ENCODE measurements at regions of chr2 and their contacts with region 1.

Region 1: GRCh38 chr2:15577071-15577735 is 14.5 kb upstream of the DDX1 start:
- DNase-seq: no peak
- H3K4me3 ChIP-seq: no peak overlapping the region
- CTCF ChIP-seq: peak; percentile 86

Region 2: GRCh38 chr2:15546297-15547098 is 30.7 kb before region 1 on chr2:
- CTCF ChIA-PET with region 1: interaction called, 11 read pairs
- POLR2A ChIA-PET with region 1: no interaction called
- DNase-seq: no peak
- H3K4me3 ChIP-seq: no peak overlapping the region
- CTCF ChIP-seq: no peak

Region 3: GRCh38 chr2:15554525-15555218 is 22.5 kb before region 1 on chr2:
- CTCF ChIA-PET with region 1: interaction called, 12 read pairs
- POLR2A ChIA-PET with region 1: no interaction called
- DNase-seq: no peak
- H3K4me3 ChIP-seq: no peak overlapping the region
- CTCF ChIP-seq: no peak

Region 4: DNA sequence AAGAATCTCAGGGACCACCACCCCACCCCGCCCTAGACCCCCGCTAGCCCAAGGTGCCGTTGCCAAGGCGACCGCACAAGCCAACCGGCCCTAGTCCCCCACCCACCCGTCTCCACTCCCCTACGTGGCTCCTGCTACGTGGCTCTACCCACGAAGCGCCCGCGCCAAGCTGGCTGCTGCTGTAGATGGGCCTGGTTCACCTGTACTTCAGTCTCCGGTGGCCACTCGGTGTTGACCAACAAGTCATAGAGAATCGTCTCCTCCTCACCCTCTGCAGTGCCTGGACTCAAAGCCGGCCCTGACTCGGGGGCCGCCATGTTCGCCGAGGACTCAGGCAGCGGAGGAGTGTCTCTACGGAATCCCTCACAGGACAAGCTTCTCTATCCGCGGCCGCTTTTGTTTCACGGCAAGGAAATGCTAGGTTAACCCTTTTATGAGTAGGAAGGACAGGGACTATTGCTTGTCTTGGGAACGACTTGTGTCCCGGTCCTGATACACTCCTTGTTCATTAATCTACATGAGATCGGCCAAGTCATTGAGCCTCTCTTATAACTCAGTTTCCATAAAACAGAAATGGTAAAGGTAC is 16.1 kb before region 1 on chr2 and contains the start of gene NBAS:
- CTCF ChIA-PET with region 1: interaction called, 111 read pairs
- POLR2A ChIA-PET with region 1: no interaction called
- DNase-seq: peak; percentile 41
- H3K4me3 ChIP-seq: peak within 1 kb of the TSS; percentile 94
- CTCF ChIP-seq: no peak

Region 5: GRCh38 chr2:15591692-15592463 is 14.7 kb after region 1 on chr2 and contains the start of gene DDX1:
- CTCF ChIA-PET with region 1: interaction called, 129 read pairs
- POLR2A ChIA-PET with region 1: no interaction called
- DNase-seq: peak; percentile 19
- H3K4me3 ChIP-seq: peak within 1 kb of the TSS; percentile 90
- CTCF ChIP-seq: no peak